Dendritic cell treated with granulocyte-macrophage colony-stimulating factor and Interleukin-4, amounts not matched to agents 40 ng/mL and 50 ng/mL, for 4 days (primary cell): ENCODE measurements at regions of chr1 and their contacts with region 1.

Region 1: DNA sequence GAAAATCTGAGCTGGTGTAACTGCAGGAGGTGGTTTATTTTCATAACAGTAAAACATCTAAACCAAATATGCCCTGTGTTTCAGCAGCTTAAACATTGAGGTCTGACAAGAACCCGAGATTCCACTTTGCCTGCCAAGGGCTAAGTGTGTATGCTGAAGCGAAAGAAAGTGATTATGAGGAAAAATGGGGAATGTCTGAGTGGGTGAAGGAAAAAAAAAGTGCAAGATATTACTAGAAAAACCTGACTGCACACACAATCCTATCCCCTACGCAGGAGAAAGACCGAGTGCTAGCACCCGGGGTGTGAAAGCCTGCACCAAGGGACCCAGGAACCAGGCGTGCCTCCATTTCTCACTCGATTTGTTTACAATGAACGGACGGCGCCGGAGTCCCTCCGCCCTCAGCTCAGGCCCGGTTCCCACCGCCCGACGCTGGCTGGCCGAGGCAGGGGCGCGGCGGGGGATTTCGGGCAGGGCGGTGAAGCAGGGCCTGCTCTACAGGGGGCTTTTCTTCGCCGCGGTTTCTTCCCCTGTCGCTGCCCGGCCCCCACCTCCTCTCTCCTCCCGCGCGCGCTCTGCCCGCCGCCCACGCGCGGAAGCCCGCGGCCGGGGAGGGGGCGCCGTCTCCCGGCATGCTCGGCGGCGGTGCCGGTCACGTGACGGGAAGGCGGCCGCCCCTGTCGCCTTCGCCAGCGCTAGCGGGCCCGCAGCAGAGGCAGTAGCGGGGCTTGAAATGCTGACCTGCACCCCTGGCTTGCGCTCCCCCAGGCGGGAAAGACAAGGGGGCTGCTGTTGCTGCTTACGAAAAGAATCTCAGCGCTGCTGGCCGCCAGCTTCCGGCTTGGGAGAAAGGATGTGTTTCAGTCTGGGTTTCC is 35.9 kb downstream of the ITPKB start:
- H3K4me3 Mint-ChIP-seq: peak overlapping the region; percentile 72
- H3K27ac Mint-ChIP-seq: peak overlapping the region; percentile 87
- H3K4me1 Mint-ChIP-seq: peaks cover 25% of the 10 kb centered on the region
- H3K27me3 Mint-ChIP-seq: no peaks in the 10 kb centered on the region

Region 2: GRCh38 chr1:226162898-226163297 is 540.3 kb before region 1 on chr1:
- intact Hi-C with region 1: no loop called
- H3K4me3 Mint-ChIP-seq: no peak overlapping the region
- H3K27ac Mint-ChIP-seq: no peak overlapping the region
- H3K4me1 Mint-ChIP-seq: peaks cover 30% of the 10 kb centered on the region
- H3K27me3 Mint-ChIP-seq: no peaks in the 10 kb centered on the region

Region 3: DNA sequence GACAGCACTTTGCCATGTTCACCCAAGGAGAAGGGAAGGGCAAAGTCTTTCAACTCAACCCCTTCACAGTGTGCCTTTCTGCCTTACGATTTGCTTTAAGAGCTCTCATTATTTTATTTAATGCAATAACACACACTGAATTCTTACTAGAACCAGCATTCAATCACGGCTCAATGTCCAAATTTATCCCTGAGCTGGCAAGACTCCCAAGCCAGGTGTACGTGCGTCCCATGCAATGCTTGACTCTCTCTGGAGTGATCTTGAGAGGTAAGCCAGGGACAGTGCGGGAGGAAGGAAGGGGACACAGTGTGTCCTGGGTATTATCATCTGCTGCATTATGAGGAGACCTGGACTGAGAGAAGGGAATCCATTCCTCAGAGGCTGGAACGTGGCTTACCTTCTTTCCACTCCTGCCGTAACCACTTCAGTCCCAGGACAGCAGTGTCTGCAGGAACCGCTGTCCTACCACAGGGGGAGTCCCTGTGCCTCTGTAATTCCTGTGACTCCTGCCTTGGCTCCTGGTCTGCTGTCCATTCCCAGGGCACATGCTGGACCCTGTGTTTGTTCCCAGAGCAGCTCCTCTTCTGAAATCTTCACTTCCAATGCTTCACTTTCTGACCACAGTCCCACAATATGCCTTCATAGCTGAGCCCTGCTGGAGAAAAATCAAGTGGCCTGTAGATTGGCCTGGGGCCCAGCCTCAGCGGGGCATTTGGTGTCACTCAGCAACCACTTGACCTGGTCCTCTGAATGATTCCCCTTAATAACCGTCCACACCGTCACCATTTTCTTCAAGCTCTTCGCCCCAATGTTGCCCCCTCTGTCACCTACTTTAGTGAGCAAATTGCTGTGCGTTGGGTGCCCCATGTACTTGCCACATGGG is 183.2 kb before region 1 on chr1:
- intact Hi-C with region 1: no loop called
- H3K4me3 Mint-ChIP-seq: no peak overlapping the region
- H3K27ac Mint-ChIP-seq: no peak overlapping the region
- H3K4me1 Mint-ChIP-seq: no peaks in the 10 kb centered on the region
- H3K27me3 Mint-ChIP-seq: no peaks in the 10 kb centered on the region

Region 4: GRCh38 chr1:226626577-226626956 is 76.6 kb before region 1 on chr1:
- intact Hi-C with region 1: loop called (anchors 5 kb)
- H3K4me3 Mint-ChIP-seq: no peak overlapping the region
- H3K27ac Mint-ChIP-seq: peak overlapping the region; percentile 60
- H3K4me1 Mint-ChIP-seq: peaks cover 29% of the 10 kb centered on the region
- H3K27me3 Mint-ChIP-seq: peaks cover 7% of the 10 kb centered on the region

Region 5: GRCh38 chr1:226736908-226737818 is 34.0 kb after region 1 on chr1:
- intact Hi-C with region 1: loop called (anchors 5 kb)
- H3K4me3 Mint-ChIP-seq: peak overlapping the region; percentile 91
- H3K27ac Mint-ChIP-seq: peak overlapping the region; percentile 92
- H3K4me1 Mint-ChIP-seq: peaks cover 40% of the 10 kb centered on the region
- H3K27me3 Mint-ChIP-seq: no peaks in the 10 kb centered on the region

Region 6: DNA sequence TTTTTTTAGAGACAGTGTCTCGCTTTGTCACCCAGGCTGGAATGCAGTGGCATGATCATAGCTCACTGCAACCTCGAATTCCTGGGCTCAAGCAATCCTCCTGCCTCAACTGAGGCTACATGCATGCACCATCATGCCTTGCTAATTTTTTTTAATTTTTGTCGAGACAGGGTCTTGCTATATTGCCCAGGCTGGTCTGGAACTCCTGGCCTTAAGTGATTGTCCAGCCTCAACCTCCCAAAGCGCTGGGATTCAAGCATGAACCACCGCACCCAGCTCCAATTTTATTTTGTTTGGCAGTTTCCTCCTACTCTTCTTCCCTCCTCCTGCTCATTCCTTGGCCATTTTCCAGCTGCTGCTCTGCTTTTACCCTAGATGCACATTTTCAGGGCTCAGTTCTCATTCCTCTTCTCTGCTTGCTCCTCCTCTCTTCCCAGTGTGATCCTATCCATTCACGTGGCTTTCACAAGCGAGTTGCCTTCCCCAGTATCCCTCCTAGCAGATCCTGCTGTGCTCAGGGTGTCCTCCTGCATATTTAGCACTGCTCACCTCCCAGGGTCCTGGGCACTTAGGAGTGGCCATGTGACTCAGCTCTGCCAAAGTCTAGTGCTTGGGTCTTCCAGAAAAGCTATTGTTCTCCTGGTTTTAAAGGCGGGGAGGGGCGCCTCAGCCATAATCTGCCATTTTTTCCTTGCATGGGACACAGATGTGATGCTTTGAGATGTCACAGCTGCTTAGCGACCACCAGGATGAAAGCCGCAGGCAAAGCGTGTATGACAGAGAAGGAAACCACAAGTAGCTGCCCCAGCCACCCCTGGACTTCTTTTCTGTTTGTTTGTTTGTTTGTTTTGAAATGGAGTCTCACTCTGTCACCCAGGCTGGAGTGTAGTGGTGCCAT is 200.9 kb after region 1 on chr1:
- intact Hi-C with region 1: no loop called
- H3K4me3 Mint-ChIP-seq: no peak overlapping the region
- H3K27ac Mint-ChIP-seq: no peak overlapping the region
- H3K4me1 Mint-ChIP-seq: no peaks in the 10 kb centered on the region
- H3K27me3 Mint-ChIP-seq: no peaks in the 10 kb centered on the region

Region 7: DNA sequence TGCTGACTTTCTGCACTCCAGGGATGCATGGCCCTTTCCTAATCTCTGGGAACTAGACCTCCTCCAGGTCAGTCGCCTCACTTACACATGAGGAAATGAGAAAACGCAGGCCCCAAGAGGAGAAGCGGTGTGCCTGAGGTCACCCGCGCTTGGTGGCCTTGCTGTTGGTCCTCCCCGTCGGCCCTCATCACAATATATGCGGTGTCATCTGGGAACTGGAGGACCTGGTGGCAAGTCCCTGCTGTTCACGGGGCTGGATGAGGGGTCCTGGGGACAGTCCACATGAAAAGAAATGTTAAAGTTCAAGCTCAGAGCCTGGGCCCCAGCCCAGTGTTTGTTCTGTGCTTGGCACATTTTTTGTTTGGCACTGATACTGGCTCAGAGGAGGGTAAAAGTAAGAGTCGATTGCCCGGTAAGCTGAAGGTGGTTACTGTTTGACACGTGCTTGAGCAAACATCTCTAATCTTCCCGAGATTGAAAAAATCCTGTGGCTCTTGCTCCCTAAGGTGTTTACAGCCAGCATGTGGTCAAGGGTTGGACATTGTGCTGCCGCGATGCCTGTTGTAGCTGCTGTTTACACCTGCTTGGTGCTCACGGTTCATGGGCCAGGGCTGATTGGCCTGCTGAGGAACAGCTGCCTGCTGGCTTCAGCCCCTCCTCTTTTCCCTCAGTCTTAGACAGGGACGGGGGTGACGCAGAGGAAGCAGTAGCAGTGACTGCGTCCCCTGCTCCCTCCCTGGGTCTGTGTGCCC is 242.1 kb after region 1 on chr1:
- intact Hi-C with region 1: no loop called
- H3K4me3 Mint-ChIP-seq: no peak overlapping the region
- H3K27ac Mint-ChIP-seq: peak overlapping the region; percentile 41
- H3K4me1 Mint-ChIP-seq: peaks cover 71% of the 10 kb centered on the region
- H3K27me3 Mint-ChIP-seq: no peaks in the 10 kb centered on the region